GM12878 (cell line): ENCODE measurements at regions of chrX and their contacts with region 1.

Region 1: DNA sequence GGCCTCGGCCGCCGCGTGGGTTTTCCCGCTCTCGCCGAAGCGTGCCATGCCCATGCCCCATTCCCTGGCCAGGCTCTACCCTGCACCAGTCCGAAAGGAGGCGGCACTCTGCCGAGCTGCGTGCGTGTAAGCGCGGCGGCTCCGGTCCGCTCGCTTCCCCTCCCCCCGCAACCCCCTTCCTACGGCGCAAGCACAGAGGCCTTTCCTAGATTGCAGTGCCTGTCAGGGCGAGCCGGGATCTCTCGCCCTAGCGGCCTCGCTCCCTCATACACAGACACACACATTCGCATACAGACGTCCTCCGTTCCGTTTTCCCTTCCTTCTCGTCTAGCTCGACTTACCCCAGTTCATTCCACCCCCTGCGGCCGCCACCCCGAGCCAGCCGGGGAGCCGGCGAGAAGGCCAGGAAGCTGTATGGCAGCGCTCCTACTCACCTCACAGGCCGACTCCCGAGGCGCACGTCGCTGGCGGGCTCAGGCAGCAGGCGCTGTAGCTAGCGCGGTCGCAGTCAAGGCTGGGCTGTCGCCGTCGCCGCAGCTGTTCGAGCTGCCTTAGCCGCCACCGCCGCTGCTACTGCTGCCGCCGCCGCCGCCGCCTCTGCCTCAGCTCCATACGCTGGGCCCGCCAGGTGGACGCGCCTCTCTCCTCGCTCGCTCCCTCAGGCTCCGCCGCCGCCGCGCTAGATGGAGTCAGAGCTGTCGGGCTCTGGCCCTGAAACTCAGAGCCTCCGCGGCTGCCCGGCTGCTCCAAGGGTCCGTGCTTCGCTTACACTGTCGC is 615 bp downstream of the NEXMIF start:
- DNase-seq: no peak
- ATAC-seq: peak; percentile 74
- H3K4me3 ChIP-seq: peak overlapping the region; percentile 49
- H3K27ac ChIP-seq: peak overlapping the region; percentile 87
- H3K4me1 ChIP-seq: no peaks in the 10 kb centered on the region
- H3K27me3 ChIP-seq: no peaks in the 10 kb centered on the region
- CTCF ChIP-seq: no peak
- EP300 ChIP-seq: 0 out of 4 replicates have a peak, but pooled peaks of 1 of the 2 experiments have one; percentile 19
- POLR2A ChIP-seq: peak; percentile 78
- RAD21 ChIP-seq: no peak

Region 2: GRCh38 chrX:74781507-74782034 is 143.1 kb before region 1 on chrX:
- CTCF ChIA-PET with region 1: interaction called, 5 read pairs
- POLR2A ChIA-PET with region 1: interaction called, 3 read pairs
- RAD21 ChIA-PET with region 1: interaction called, 36 read pairs
- SMC1A ChIA-PET with region 1: interaction called, 39 read pairs
- in situ Hi-C with region 1: no loop called
- intact Hi-C with region 1: loop called (anchors 2 kb)
- DNase-seq: peak; percentile 76
- ATAC-seq: peak; percentile 73
- H3K4me3 ChIP-seq: no peak overlapping the region
- H3K27ac ChIP-seq: peak overlapping the region; percentile 85
- H3K4me1 ChIP-seq: peaks cover 10% of the 10 kb centered on the region
- H3K27me3 ChIP-seq: no peaks in the 10 kb centered on the region
- CTCF ChIP-seq: no peak
- EP300 ChIP-seq: no peak
- POLR2A ChIP-seq: no peak
- RAD21 ChIP-seq: peak; percentile 16; the same call in 1 of the 2 replicates

Region 3: GRCh38 chrX:74890676-74891430 is 33.8 kb before region 1 on chrX:
- CTCF ChIA-PET with region 1: interaction called, 7 read pairs
- POLR2A ChIA-PET with region 1: interaction called, 4 read pairs
- RAD21 ChIA-PET with region 1: interaction called, 7 read pairs
- SMC1A ChIA-PET with region 1: interaction called, 8 read pairs
- in situ Hi-C with region 1: no loop called
- intact Hi-C with region 1: loop called (anchors 1 kb)
- DNase-seq: peak; percentile 80
- ATAC-seq: peak; percentile 95
- H3K4me3 ChIP-seq: no peak overlapping the region
- H3K27ac ChIP-seq: peak overlapping the region; percentile 45
- H3K4me1 ChIP-seq: no peaks in the 10 kb centered on the region
- H3K27me3 ChIP-seq: no peaks in the 10 kb centered on the region
- CTCF ChIP-seq: no peak
- EP300 ChIP-seq: no peak
- POLR2A ChIP-seq: no peak
- RAD21 ChIP-seq: peak; percentile 27; the same call in 1 of the 2 replicates

Region 4: GRCh38 chrX:75156021-75156945 is 231.6 kb after region 1 on chrX and contains the start of gene ABCB7:
- CTCF ChIA-PET with region 1: no interaction called
- POLR2A ChIA-PET with region 1: no interaction called
- RAD21 ChIA-PET with region 1: interaction called, 3 read pairs
- SMC1A ChIA-PET with region 1: no interaction called
- in situ Hi-C with region 1: no loop called
- intact Hi-C with region 1: loop called (anchors 5 kb)
- DNase-seq: peak; percentile 34
- ATAC-seq: peak; percentile 89
- H3K4me3 ChIP-seq: peak within 1 kb of the TSS; percentile 74
- H3K27ac ChIP-seq: peak within 1 kb of the TSS; percentile 74
- H3K4me1 ChIP-seq: no peaks in the 10 kb centered on the region; the same call in 1 of the 2 replicates
- H3K27me3 ChIP-seq: no peaks in the 10 kb centered on the region
- CTCF ChIP-seq: 0 out of 6 replicates have a peak, but pooled peaks of 1 of the 3 experiments have one; percentile 4
- EP300 ChIP-seq: no peak
- POLR2A ChIP-seq: peak; percentile 84
- RAD21 ChIP-seq: no peak
- polyA plus RNA-seq, gene ABCB7: 31.1 to 34.6 TPM

Region 5: DNA sequence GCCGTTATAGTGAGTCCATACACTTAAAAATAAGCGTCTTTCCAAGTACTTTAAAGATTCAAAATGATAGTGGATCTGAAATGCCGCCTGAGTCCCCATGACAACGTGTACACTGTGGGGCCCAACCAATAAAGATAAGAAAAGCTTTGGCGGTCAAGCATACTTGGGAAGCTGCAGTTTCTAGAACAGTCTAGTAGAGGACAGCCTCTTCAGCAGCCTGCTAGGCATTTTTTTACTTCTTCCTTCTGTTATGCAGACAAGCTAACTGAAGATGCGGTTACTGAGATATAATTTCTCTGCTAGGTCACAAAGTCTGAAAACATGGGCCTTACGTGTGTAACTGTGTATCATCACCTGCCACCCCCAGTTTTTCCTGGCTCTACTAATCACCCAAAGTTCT is 348.8 kb after region 1 on chrX:
- CTCF ChIA-PET with region 1: no interaction called
- POLR2A ChIA-PET with region 1: no interaction called
- RAD21 ChIA-PET with region 1: no interaction called
- SMC1A ChIA-PET with region 1: no interaction called
- in situ Hi-C with region 1: loop called (anchors 10 kb)
- intact Hi-C with region 1: loop called (anchors 5 kb)
- DNase-seq: no peak
- ATAC-seq: peak; percentile 7; the same call in 2 of the 3 replicates
- H3K4me3 ChIP-seq: peak overlapping the region; percentile 70
- H3K27ac ChIP-seq: peak overlapping the region; percentile 81
- H3K4me1 ChIP-seq: no peaks in the 10 kb centered on the region
- H3K27me3 ChIP-seq: no peaks in the 10 kb centered on the region
- CTCF ChIP-seq: no peak
- EP300 ChIP-seq: no peak
- POLR2A ChIP-seq: no peak
- RAD21 ChIP-seq: no peak

Region 6: DNA sequence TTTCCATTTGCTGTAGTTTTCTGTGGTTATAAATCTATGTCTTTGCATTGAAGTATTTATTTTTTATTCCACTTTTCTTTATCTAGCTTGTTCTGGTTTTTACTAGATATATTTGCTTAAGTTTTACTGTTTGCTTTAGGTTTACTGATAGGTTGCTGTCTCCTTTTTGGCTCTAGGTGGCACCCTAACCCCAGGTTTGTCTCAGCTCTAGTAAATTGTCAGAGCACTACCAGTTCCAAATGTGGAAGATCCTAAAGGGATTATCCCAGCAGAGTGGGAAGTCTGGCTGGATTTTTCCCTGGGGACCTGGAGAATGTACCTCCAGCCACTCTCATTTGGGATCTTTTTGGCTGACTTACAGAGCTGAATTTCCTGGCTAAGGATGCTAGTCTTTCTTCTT is 1354.4 kb after region 1 on chrX:
- CTCF ChIA-PET with region 1: no interaction called
- POLR2A ChIA-PET with region 1: no interaction called
- RAD21 ChIA-PET with region 1: no interaction called
- SMC1A ChIA-PET with region 1: no interaction called
- in situ Hi-C with region 1: no loop called
- intact Hi-C with region 1: no loop called
- DNase-seq: peak; percentile 5
- ATAC-seq: peak; percentile 79
- H3K4me3 ChIP-seq: no peak overlapping the region
- H3K27ac ChIP-seq: no peak overlapping the region
- H3K4me1 ChIP-seq: no peaks in the 10 kb centered on the region
- H3K27me3 ChIP-seq: no peaks in the 10 kb centered on the region
- CTCF ChIP-seq: peak; percentile 61 to 79 (median 74)
- EP300 ChIP-seq: no peak
- POLR2A ChIP-seq: no peak
- RAD21 ChIP-seq: peak; percentile 94